ENCODE measurements at regions of chr20 and their contacts with region 1.

Region 1: GRCh38 chr20:20199361-20200160 is 147.2 kb downstream of the CFAP61 start:
- DNase-seq: no peak
- ATAC-seq: no peak

Region 2: DNA sequence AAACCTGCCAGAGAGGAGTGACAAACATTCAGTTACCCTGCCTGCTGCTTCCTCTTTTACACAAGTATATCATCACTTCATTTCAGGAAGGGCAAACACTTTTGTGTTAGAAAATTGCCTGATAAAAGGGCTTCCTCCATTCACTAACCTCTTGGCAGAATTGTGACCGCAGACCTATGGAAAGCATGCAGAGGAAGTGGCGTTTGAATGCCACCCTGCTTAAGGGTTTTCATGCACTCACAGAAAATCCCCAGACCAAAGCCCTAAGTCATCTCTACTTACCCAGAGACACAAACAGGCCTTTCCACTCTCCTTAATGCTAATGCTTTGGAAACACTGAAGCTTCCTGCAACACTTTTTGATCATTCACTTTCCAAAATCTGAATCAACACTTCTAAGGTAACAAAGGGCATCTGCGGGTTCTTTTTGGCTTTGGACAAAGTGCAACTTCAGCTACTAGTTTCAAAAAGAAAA is 535.0 kb after region 1 on chr20:
- intact Hi-C with region 1: loop called (anchors 10 kb)
- DNase-seq: no peak
- ATAC-seq: no peak